Uterus (tissue), 4 donors: ENCODE measurements at regions of chr17 and their contacts with region 1.

Region 1: GRCh38 chr17:40479533-40480480 is 21.6 kb downstream of the TNS4 start:
- DNase-seq: no peak
- H3K4me3 ChIP-seq: no peak overlapping the region
- H3K27ac ChIP-seq: no peak overlapping the region
- H3K4me1 ChIP-seq: no peaks in the 10 kb centered on the region
- H3K27me3 ChIP-seq: no peaks in the 10 kb centered on the region
- CTCF ChIP-seq: no peak
- POLR2A ChIP-seq: no peak

Region 2: GRCh38 chr17:40536295-40537171 is 56.7 kb after region 1 on chr17:
- intact Hi-C with region 1: loop called (anchors 10 kb)
- DNase-seq: peak; percentile 62 to 72
- H3K4me3 ChIP-seq: no peak overlapping the region
- H3K27ac ChIP-seq: peak overlapping the region; percentile 93 to 98
- H3K4me1 ChIP-seq: peaks cover 4 to 28% of the 10 kb centered on the region in 2 donors
- H3K27me3 ChIP-seq: no peaks in the 10 kb centered on the region
- CTCF ChIP-seq: no peak
- POLR2A ChIP-seq: no peak